Activated CD8-positive, alpha-beta T cell treated with anti-CD3 and anti-CD28 coated beads for 36 hours (primary cell): ENCODE measurements at regions of chr12 and their contacts with region 1.

Region 1: GRCh38 chr12:57546438-57547383 is at the start of gene DCTN2:
- DNase-seq: peak; percentile 98
- ATAC-seq: peak; percentile 96
- H3K4me3 Mint-ChIP-seq: peak within 1 kb of the TSS; percentile 95
- H3K27ac Mint-ChIP-seq: peak within 1 kb of the TSS; percentile 94
- H3K4me1 Mint-ChIP-seq: peaks cover 45% of the 10 kb centered on the region
- H3K27me3 Mint-ChIP-seq: peaks cover 4% of the 10 kb centered on the region
- CTCF ChIP-seq: no peak
- total RNA-seq, gene DCTN2: 66.2 to 68.6 TPM

Region 2: GRCh38 chr12:57476162-57476992 is 70.3 kb before region 1 on chr12:
- CTCF ChIA-PET with region 1: no interaction called
- POLR2A ChIA-PET with region 1: no interaction called
- intact Hi-C with region 1: no loop called
- DNase-seq: peak; percentile 93
- ATAC-seq: peak; percentile 67
- H3K4me3 Mint-ChIP-seq: peak overlapping the region; percentile 89
- H3K27ac Mint-ChIP-seq: peak overlapping the region; percentile 99
- H3K4me1 Mint-ChIP-seq: peaks cover 58% of the 10 kb centered on the region
- H3K27me3 Mint-ChIP-seq: no peaks in the 10 kb centered on the region
- CTCF ChIP-seq: peak; percentile 95

Region 3: GRCh38 chr12:57535764-57536596 is 10.7 kb before region 1 on chr12:
- CTCF ChIA-PET with region 1: interaction called, 9 read pairs
- POLR2A ChIA-PET with region 1: interaction called, 11 read pairs
- intact Hi-C with region 1: no loop called
- DNase-seq: no peak
- ATAC-seq: no peak
- H3K4me3 Mint-ChIP-seq: no peak overlapping the region
- H3K27ac Mint-ChIP-seq: no peak overlapping the region
- H3K4me1 Mint-ChIP-seq: peaks cover 3% of the 10 kb centered on the region
- H3K27me3 Mint-ChIP-seq: no peaks in the 10 kb centered on the region
- CTCF ChIP-seq: no peak

Region 4: GRCh38 chr12:57590536-57591479 is 44.1 kb after region 1 on chr12 and contains the start of gene PIP4K2C:
- CTCF ChIA-PET with region 1: no interaction called
- POLR2A ChIA-PET with region 1: no interaction called
- intact Hi-C with region 1: no loop called
- DNase-seq: peak; percentile 85
- ATAC-seq: peak; percentile 97
- H3K4me3 Mint-ChIP-seq: peak within 1 kb of the TSS; percentile 79
- H3K27ac Mint-ChIP-seq: peak within 1 kb of the TSS; percentile 77
- H3K4me1 Mint-ChIP-seq: peaks cover 24% of the 10 kb centered on the region
- H3K27me3 Mint-ChIP-seq: no peaks in the 10 kb centered on the region
- CTCF ChIP-seq: no peak
- total RNA-seq, gene PIP4K2C: 10.7 to 12.3 TPM